CD4-positive, alpha-beta memory T cell (primary cell): ENCODE measurements at regions of chr19 and their contacts with region 1.

Region 1: DNA sequence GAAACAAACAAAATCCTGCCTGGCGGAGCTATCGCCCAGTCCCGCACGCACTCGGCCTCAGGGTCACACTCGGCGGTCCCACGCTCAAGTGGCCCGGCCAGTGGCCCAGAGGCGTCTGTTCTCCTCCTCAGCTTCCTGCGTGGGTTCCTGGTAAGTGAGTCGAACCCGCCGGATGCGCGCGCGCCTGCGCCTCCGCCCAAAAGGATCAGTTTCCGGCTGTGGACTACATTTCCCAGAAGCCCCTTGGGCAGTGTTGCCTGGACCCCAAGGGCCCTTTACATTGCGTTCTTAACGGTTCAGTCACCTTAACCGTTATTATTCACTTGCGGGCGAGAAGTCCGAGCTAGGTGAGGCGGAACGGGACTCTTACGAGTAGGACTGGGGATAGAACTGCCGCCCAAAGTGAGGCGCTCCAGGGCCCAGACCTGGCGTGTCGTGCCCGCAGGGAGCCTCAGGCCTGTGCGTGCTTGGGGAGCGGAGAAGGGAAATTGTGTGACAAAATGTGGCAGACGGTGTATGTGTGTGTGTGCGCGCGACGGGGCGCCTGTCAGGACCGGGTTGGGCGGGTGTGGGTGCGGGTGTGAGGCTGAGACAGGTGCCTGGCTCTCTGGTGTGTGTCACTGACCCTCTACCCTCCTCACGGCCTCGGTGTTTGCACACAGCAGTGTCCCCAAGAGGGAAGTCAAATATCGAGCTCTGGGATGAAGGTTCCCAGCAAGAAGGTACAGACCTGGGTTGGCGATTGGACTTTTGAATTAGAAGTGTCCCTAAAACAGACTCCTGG is at the start of gene ZNF546:
- DNase-seq: peak; percentile 87 to 93 (median 90)
- H3K4me3 ChIP-seq: peak within 1 kb of the TSS; percentile 98 to 99
- H3K4me3 Mint-ChIP-seq: peak within 1 kb of the TSS; percentile 93 to 100 (median 99)
- H3K27ac ChIP-seq: peak within 1 kb of the TSS; percentile 82
- H3K27ac Mint-ChIP-seq: peak within 1 kb of the TSS; percentile 79 to 98 (median 96)
- H3K4me1 ChIP-seq: peaks cover 19% of the 10 kb centered on the region
- H3K4me1 Mint-ChIP-seq: peaks cover 27 to 53% (median 37%) of the 10 kb centered on the region in 4 donors
- H3K27me3 ChIP-seq: no peaks in the 10 kb centered on the region
- H3K27me3 Mint-ChIP-seq: no peaks in the 10 kb centered on the region
- total RNA-seq, gene ZNF546: 17.5 to 18.4 TPM

Region 2: DNA sequence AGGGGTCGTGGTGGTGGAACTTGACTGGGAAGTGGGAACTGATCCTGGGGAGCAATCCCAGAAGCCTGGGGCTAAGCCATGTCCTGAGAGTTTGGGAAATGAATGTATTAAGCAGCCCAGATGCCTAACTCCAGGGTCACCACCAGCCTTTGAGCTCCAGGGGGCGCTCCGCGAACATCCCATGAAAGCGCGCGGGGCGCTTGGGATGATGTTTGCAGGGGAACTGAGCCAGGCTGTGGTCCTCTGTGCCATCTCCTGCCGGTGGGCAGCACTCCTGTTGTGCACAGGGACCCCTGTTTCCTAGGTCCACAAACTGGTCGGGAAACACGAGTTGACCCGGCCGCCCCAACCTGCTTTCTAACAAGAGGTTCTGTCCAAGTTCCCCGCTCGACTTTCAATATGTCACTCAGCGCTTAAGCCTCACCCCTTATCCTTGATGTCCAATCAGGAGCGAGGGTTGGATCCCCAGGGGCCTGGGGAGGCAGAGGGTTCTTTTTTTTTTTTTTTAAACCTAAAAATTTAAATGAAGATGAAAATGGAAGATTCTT is 203.9 kb before region 1 on chr19:
- CTCF ChIA-PET with region 1: no interaction called
- POLR2A ChIA-PET with region 1: no interaction called
- intact Hi-C with region 1: no loop called
- DNase-seq: peak; percentile 67 to 78 (median 69)
- H3K4me3 ChIP-seq: peak overlapping the region; percentile 63 to 73
- H3K4me3 Mint-ChIP-seq: peak overlapping the region; percentile 71 to 85 (median 80)
- H3K27ac ChIP-seq: no peak overlapping the region
- H3K27ac Mint-ChIP-seq: peak overlapping the region in 2 of 7 donors; percentile 19 to 69
- H3K4me1 ChIP-seq: peaks cover 3% of the 10 kb centered on the region
- H3K4me1 Mint-ChIP-seq: peaks cover 0 to 5% (median 2%) of the 10 kb centered on the region in 4 donors
- H3K27me3 ChIP-seq: no peaks in the 10 kb centered on the region
- H3K27me3 Mint-ChIP-seq: peaks cover 0 to 9% of the 10 kb centered on the region in 2 donors

Region 3: DNA sequence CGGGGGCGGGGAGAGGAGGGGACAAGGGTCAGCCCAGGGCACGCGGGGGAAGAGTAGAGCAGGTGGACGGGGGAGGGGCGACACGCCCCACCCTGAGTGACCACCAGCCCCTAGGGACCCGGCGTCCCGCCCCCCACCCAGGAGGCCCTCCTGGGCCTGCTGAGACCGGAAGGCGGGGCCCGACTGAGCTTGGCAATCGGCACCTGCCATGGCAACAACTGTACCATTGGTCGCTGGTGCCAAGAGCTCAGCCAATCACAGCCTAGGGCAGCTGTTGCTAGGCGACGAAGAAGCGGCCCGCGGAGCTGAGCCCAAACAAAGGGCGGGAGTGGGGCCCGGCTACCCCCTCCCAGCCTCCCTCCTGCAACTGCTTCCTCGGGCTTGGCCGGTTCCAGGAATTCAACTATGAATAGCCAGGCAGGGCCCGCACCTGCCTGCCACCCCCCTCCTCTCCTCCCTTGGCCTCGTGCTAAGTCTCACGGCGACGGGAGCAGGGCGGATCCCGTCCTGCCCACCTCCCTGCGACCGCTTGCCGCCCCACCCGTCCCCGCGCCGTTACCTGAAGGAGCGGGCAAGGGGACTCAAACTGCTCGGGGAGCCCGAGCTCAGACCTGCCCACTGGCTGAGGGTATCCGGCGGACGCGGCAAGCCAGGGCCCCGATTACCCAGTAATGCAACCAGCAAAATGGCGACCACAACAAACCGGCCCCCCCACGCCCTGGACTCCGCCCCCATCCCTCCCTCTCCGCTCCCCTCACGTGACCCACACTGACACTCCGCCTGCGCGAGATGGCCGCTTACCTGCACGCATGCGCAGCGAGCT is 163.3 kb before region 1 on chr19 and contains the start of gene DYRK1B:
- CTCF ChIA-PET with region 1: no interaction called
- POLR2A ChIA-PET with region 1: interaction called, 17 read pairs
- intact Hi-C with region 1: no loop called
- DNase-seq: peak; percentile 96 to 98 (median 98)
- H3K4me3 ChIP-seq: peak within 1 kb of the TSS; percentile 81 to 98
- H3K4me3 Mint-ChIP-seq: peak within 1 kb of the TSS; percentile 79 to 90 (median 86)
- H3K27ac ChIP-seq: peak within 1 kb of the TSS; percentile 91
- H3K27ac Mint-ChIP-seq: peak within 1 kb of the TSS; percentile 77 to 99 (median 96)
- H3K4me1 ChIP-seq: peaks cover 30% of the 10 kb centered on the region
- H3K4me1 Mint-ChIP-seq: peaks cover 24 to 39% (median 31%) of the 10 kb centered on the region in 4 donors
- H3K27me3 ChIP-seq: no peaks in the 10 kb centered on the region
- H3K27me3 Mint-ChIP-seq: no peaks in the 10 kb centered on the region
- total RNA-seq, gene DYRK1B: 28.4 to 30.9 TPM

Region 4: DNA sequence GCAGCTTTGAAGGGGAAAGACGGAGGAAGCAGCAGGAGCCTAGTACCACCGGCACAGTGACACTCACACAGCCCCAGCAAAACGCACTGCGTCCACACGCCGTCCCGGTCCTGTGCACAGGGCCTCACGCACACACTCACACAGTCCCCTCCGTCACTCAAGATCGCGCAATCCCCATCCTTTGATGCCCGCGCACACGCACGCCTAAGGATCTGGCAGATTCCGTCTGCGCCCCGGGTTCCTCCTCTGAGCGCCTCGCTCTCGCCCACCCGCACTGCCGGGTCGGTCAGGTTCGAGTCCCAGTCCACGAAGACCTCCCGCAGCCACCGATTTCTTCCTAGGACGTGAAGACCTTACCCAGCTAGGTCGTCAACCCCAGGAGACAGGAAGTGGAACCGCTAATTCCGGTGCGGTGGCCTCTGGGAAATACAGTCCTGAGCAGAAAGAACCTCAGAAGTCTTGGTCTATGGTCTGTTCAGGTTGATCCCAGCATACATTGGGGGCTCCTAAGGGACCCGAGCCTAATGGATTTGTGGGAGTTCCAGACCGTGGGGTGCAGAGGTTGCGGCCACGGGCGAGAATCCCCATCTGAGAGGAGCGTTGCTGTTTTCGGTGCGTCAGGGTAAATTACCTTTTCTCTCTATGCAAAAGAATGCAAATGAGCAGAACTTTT is 59.0 kb after region 1 on chr19 and contains the start of gene ZNF780B:
- CTCF ChIA-PET with region 1: no interaction called
- POLR2A ChIA-PET with region 1: interaction called, 12 read pairs
- intact Hi-C with region 1: loop called (anchors 2 kb)
- DNase-seq: peak; percentile 67 to 82 (median 72)
- H3K4me3 ChIP-seq: peak within 1 kb of the TSS; percentile 77
- H3K4me3 Mint-ChIP-seq: peak within 1 kb of the TSS; percentile 98 to 100 (median 99)
- H3K27ac ChIP-seq: peak within 1 kb of the TSS; percentile 72
- H3K27ac Mint-ChIP-seq: peak within 1 kb of the TSS; percentile 90 to 99 (median 97)
- H3K4me1 ChIP-seq: peaks cover 39% of the 10 kb centered on the region
- H3K4me1 Mint-ChIP-seq: peaks cover 38 to 51% (median 46%) of the 10 kb centered on the region in 4 donors
- H3K27me3 ChIP-seq: no peaks in the 10 kb centered on the region
- H3K27me3 Mint-ChIP-seq: peaks cover 0 to 4% of the 10 kb centered on the region in 2 donors
- total RNA-seq, gene ZNF780B: 63.3 to 66.2 TPM